WTC11 (cell line): ENCODE measurements at regions of chr17 and their contacts with region 1.

Region 1: DNA sequence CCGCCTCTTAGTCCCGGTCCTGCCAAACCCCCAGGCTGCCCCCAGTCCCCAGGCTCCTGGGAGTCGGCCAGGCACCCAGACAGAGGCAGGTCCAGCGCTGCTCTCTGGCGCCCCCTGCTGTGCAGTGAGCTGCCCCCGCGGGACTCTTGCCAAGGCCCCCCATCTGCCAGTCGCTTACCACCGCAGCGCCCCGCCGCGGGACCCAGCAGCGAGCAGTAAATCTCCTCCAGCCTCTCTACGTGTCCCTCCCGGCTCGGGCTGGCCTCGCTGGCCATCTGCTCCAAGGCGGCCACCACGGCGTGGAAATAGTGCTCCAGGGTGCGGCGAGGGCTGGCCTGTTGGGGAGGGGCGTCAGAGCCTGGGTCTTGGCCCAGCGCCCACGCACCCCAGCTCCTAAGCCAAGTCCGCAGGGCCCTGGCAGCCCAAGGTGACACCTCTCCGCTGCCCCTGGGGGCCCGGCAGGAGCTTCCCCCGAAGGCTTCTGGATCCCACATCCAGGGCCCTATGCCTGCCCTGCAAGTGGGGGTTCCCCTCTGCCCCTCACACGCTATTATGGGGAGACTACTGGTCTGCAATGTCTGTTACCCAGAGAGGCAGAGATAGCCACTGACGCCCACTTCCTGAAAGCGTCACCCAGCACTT is 33.7 kb upstream of the MFSD6L start:
- DNase-seq: peak; percentile 87
- ATAC-seq: peak; percentile 75
- H3K4me3 Mint-ChIP-seq: no peak overlapping the region
- H3K27ac Mint-ChIP-seq: no peak overlapping the region
- H3K4me1 Mint-ChIP-seq: peaks cover 9% of the 10 kb centered on the region
- H3K27me3 Mint-ChIP-seq: no peaks in the 10 kb centered on the region
- CTCF ChIP-seq: peak; percentile 79

Region 2: DNA sequence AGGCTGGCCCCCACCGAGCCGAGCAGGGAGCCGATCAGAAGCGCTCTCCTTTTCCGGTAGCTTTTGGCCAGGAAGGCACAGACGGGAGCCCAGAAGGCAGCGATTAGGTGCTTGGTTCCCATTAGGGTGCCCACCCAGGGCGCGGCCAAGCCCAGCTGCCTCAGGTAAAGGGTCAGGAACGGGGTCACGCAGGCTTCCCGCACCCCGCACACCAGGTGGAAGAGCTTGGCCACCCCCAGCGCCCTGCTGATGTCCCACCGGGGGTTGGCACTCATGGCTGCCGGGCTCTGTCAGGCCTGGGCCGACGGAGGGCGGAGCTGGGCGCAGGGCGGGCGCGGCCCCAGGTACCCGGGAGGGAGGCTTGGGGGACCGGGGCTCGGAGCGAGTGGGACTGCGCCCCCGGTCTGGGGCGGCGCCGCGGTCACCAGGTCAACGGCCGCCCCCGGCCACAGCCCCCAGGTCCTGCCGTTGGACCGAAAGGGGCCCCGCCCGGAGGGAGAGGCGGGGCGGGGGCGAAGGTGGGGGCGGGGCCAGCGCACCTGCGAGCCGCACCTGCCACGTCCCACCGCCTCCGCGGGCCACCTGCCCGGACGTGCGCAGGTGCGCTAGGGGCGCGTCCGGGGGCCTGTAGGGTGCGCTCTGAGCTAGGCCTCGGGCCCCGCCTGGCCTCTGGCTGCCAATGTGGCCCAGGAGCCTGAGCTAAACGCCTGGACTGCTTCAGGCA is 33.8 kb before region 1 on chr17 and contains the start of gene MFSD6L:
- CTCF ChIA-PET with region 1: interaction called, 132 read pairs
- POLR2A ChIA-PET with region 1: interaction called, 4 read pairs
- DNase-seq: peak; percentile 88
- ATAC-seq: peak; percentile 96
- H3K4me3 Mint-ChIP-seq: peak within 1 kb of the TSS; percentile 81
- H3K27ac Mint-ChIP-seq: peak within 1 kb of the TSS; percentile 27; the same call in 1 of the 2 replicates
- H3K4me1 Mint-ChIP-seq: peaks cover 23% of the 10 kb centered on the region
- H3K27me3 Mint-ChIP-seq: peaks cover 4% of the 10 kb centered on the region; the same call in 1 of the 2 replicates
- CTCF ChIP-seq: no peak
- total RNA-seq, gene MFSD6L: 4.0 to 5.2 TPM (median 4.5 TPM) in 3 replicates

Region 3: GRCh38 chr17:8843344-8843743 is 10.5 kb after region 1 on chr17:
- CTCF ChIA-PET with region 1: interaction called, 19 read pairs
- POLR2A ChIA-PET with region 1: no interaction called
- DNase-seq: no peak
- ATAC-seq: no peak
- H3K4me3 Mint-ChIP-seq: no peak overlapping the region
- H3K27ac Mint-ChIP-seq: no peak overlapping the region
- H3K4me1 Mint-ChIP-seq: peaks cover 16% of the 10 kb centered on the region
- H3K27me3 Mint-ChIP-seq: peaks cover 3% of the 10 kb centered on the region
- CTCF ChIP-seq: no peak

Region 4: GRCh38 chr17:8857919-8858318 is 25.1 kb after region 1 on chr17:
- CTCF ChIA-PET with region 1: interaction called, 14 read pairs
- POLR2A ChIA-PET with region 1: no interaction called
- DNase-seq: no peak
- ATAC-seq: peak; percentile 44; the same call in 1 of the 2 replicates
- H3K4me3 Mint-ChIP-seq: no peak overlapping the region
- H3K27ac Mint-ChIP-seq: peak overlapping the region; percentile 98
- H3K4me1 Mint-ChIP-seq: peaks cover 41% of the 10 kb centered on the region
- H3K27me3 Mint-ChIP-seq: no peaks in the 10 kb centered on the region; the same call in 1 of the 2 replicates
- CTCF ChIP-seq: no peak

Region 5: GRCh38 chr17:8887834-8888703 is 55.2 kb after region 1 on chr17:
- CTCF ChIA-PET with region 1: interaction called, 34 read pairs
- POLR2A ChIA-PET with region 1: no interaction called
- DNase-seq: peak; percentile 89
- ATAC-seq: peak; percentile 82
- H3K4me3 Mint-ChIP-seq: no peak overlapping the region
- H3K27ac Mint-ChIP-seq: no peak overlapping the region
- H3K4me1 Mint-ChIP-seq: no peaks in the 10 kb centered on the region; the same call in 1 of the 2 replicates
- H3K27me3 Mint-ChIP-seq: no peaks in the 10 kb centered on the region; the same call in 1 of the 2 replicates
- CTCF ChIP-seq: no peak

Region 6: DNA sequence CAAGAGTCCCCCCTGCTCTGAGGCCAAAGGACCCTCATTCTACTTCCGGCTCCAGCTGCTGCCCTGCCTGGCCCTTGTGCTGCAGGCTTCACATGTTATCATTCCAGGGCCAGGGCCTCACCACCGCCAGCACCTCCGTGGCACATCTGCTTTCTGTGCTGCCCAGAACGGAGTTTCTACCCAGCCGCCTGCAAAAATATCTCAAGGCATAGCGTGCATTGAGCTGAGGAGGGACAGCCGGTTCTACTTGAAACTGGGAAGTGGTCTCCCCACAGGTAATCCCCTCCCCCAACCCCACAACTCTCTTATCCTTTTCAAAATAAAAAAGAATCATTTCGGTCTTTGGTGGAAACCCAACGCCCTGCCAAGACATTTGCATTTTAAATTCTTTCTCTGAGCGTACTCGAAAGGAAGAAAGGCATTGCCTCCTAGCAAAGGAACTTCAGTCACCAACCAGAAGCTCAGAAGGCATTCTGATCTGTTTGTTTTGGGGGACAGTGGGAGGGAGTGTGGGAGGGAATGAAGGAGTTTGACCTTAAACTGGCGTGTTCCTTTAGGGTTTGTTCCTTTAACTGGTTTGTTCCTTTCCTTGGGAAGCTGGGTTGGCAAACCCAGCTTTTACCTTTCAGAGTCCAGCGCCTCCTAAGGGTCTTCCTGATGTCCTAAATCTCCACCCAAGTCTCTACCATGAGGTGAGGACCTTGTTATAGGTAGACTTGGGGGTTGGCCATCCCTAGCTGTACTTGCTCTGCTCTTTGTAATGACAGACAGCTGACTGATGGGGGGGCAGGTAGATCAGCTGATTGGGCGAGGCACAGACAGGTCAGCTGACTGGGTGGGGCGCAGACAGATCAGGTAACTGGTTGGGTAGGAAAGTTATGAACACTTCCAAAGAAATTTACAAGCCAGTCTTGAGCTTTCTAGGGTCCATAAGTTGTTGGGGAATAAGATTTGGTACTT is 68.1 kb after region 1 on chr17:
- CTCF ChIA-PET with region 1: interaction called, 33 read pairs
- POLR2A ChIA-PET with region 1: no interaction called
- DNase-seq: no peak
- ATAC-seq: peak; percentile 32; the same call in 1 of the 2 replicates
- H3K4me3 Mint-ChIP-seq: peak overlapping the region; percentile 24
- H3K27ac Mint-ChIP-seq: no peak overlapping the region; the same call in 1 of the 2 replicates
- H3K4me1 Mint-ChIP-seq: peaks cover 22% of the 10 kb centered on the region
- H3K27me3 Mint-ChIP-seq: no peaks in the 10 kb centered on the region; the same call in 1 of the 2 replicates
- CTCF ChIP-seq: no peak